ENCODE measurements at regions of chr4 and their contacts with region 1.

Region 1: GRCh38 chr4:39697740-39698423 is at the start of gene UBE2K:
- DNase-seq: peak; percentile 88
- H3K4me3 ChIP-seq: peak within 1 kb of the TSS; percentile 84 to 97 (median 86)
- H3K27ac ChIP-seq: peak within 1 kb of the TSS; percentile 79
- H3K4me1 ChIP-seq: peaks cover 8% of the 10 kb centered on the region
- H3K27me3 ChIP-seq: no peaks in the 10 kb centered on the region
- CTCF ChIP-seq: no peak
- total RNA-seq, gene UBE2K: 23.3 to 105 TPM

Region 2: GRCh38 chr4:39732728-39733127 is 34.8 kb after region 1 on chr4:
- CTCF ChIA-PET with region 1: no interaction called
- dilution Hi-C with region 1: no loop called
- in situ Hi-C with region 1: no loop called
- intact Hi-C with region 1: loop called (anchors 5 kb)
- DNase-seq: peak; percentile 78
- H3K4me3 ChIP-seq: no peak overlapping the region
- H3K27ac ChIP-seq: peak overlapping the region; percentile 29
- H3K4me1 ChIP-seq: peaks cover 11% of the 10 kb centered on the region
- H3K27me3 ChIP-seq: no peaks in the 10 kb centered on the region
- CTCF ChIP-seq: no peak

Region 3: GRCh38 chr4:39786838-39787237 is 89.0 kb after region 1 on chr4:
- CTCF ChIA-PET with region 1: no interaction called
- dilution Hi-C with region 1: no loop called
- in situ Hi-C with region 1: no loop called
- intact Hi-C with region 1: loop called (anchors 10 kb)
- DNase-seq: no peak
- H3K4me3 ChIP-seq: no peak overlapping the region
- H3K27ac ChIP-seq: no peak overlapping the region
- H3K4me1 ChIP-seq: no peaks in the 10 kb centered on the region
- H3K27me3 ChIP-seq: no peaks in the 10 kb centered on the region
- CTCF ChIP-seq: no peak

Region 4: DNA sequence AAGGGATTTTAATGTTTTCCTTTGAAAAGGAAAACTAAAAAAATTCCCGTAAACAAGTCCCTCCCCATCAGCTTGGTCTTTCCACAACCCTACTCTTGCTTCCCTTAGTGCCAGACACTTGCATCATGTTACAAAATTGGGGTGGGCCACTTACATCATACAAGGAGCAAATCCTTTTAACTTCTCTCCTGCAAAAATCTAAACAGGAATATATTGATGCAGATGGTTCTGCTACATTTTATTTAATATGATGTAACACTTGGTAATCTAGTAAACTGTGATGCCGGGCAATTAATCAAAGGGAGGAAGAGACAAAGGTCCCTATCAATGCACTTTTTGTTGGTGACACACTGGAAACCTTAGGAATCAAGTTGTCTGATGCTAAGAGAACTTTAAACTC is 125.3 kb after region 1 on chr4:
- CTCF ChIA-PET with region 1: no interaction called
- dilution Hi-C with region 1: no loop called
- in situ Hi-C with region 1: no loop called
- intact Hi-C with region 1: no loop called
- DNase-seq: no peak
- H3K4me3 ChIP-seq: no peak overlapping the region
- H3K27ac ChIP-seq: no peak overlapping the region
- H3K4me1 ChIP-seq: no peaks in the 10 kb centered on the region
- H3K27me3 ChIP-seq: no peaks in the 10 kb centered on the region
- CTCF ChIP-seq: no peak

Measured in mammary epithelial cell (primary cell).